H1 (cell line): ENCODE measurements at regions of chr10 and their contacts with region 1.

Region 1: GRCh38 chr10:110497438-110498086 is at the start of gene DUSP5:
- DNase-seq: peak; percentile 56 to 94
- H3K4me3 ChIP-seq: peak within 1 kb of the TSS; percentile 65 to 96 (median 80)
- H3K27ac ChIP-seq: peak within 1 kb of the TSS; percentile 62; the same call in 1 of the 2 replicates
- H3K4me1 ChIP-seq: peaks cover 12 to 33% (median 23%) of the 10 kb centered on the region in 4 experiments
- H3K27me3 ChIP-seq: peaks cover 0 to 34% (median 17%) of the 10 kb centered on the region in 4 experiments; a peak in 5 of 7 replicates
- CTCF ChIP-seq: no peak
- EP300 ChIP-seq: no peak
- POLR2A ChIP-seq: peak; percentile 84 to 94
- RAD21 ChIP-seq: no peak
- total RNA-seq, gene DUSP5: 27.0 and 30.3 TPM in 2 replicates

Region 2: GRCh38 chr10:110508806-110509544 is 11.4 kb after region 1 on chr10:
- CTCF ChIA-PET with region 1: interaction called, 4 read pairs
- POLR2A ChIA-PET with region 1: interaction called, 20 read pairs
- DNase-seq: no peak
- H3K4me3 ChIP-seq: no peak overlapping the region
- H3K27ac ChIP-seq: no peak overlapping the region
- H3K4me1 ChIP-seq: no peaks in the 10 kb centered on the region
- H3K27me3 ChIP-seq: no peaks in the 10 kb centered on the region
- CTCF ChIP-seq: no peak
- EP300 ChIP-seq: no peak
- POLR2A ChIP-seq: no peak
- RAD21 ChIP-seq: no peak